ENCODE measurements at regions of chr2 and their contacts with region 1.

Region 1: GRCh38 chr2:70086838-70087701 is at the start of gene PCBP1:
- DNase-seq: peak; percentile 92
- H3K4me3 Mint-ChIP-seq: peak within 1 kb of the TSS; percentile 98
- H3K27ac Mint-ChIP-seq: peak within 1 kb of the TSS; percentile 99
- H3K4me1 Mint-ChIP-seq: peaks cover 53% of the 10 kb centered on the region
- H3K27me3 Mint-ChIP-seq: no peaks in the 10 kb centered on the region
- total RNA-seq, gene PCBP1: 433 and 442 TPM in 2 replicates

Region 2: GRCh38 chr2:70069049-70069448 is 18.0 kb before region 1 on chr2:
- intact Hi-C with region 1: loop called (anchors 1 kb)
- DNase-seq: peak; percentile 75
- H3K4me3 Mint-ChIP-seq: no peak overlapping the region
- H3K27ac Mint-ChIP-seq: peak overlapping the region; percentile 86
- H3K4me1 Mint-ChIP-seq: peaks cover 41% of the 10 kb centered on the region
- H3K27me3 Mint-ChIP-seq: no peaks in the 10 kb centered on the region

Region 3: DNA sequence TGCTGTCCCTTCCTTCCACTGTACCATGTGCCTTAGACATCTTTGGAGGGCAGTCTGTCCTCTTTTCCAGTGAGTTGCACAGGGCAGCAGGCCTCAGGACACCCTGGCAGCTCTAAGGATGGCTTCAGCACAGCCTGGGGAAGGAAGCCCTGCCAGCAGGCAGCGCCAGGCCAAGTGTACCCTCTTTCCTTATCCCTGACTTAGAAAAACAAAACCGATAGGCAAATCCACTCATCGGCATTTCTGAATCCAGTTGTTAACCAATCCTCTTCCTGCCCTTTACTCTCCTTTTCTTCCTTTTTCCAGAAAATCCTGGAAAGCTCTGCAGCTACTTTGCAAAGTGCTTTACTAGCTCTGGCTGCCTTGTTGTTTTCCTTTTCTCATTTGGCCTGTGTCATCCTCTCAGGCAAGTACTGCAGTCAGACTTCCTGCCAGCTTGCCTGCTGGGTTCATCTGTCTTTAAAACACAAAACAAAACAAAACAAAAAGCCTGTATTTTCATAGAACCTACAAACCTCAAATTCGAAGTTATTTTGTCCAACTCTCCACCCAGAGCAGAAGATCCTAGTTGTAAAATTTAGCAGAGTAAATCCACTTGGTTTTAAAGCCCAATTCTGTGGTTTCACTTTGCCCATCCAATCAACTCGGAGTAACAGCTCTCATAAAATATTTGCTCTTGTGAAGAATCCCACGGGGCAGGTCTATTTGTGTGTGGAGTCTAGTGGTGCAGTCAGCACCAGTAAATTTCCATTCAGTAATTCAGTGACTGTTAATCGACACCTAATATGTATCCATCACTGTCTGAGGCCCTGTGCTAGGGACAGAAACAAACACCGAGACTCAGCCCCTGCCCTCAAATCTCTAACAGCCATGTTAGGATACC is 45.4 kb after region 1 on chr2:
- intact Hi-C with region 1: loop called (anchors 1 kb)
- DNase-seq: no peak
- H3K4me3 Mint-ChIP-seq: peak overlapping the region; percentile 87
- H3K27ac Mint-ChIP-seq: peak overlapping the region; percentile 99
- H3K4me1 Mint-ChIP-seq: peaks cover 61% of the 10 kb centered on the region
- H3K27me3 Mint-ChIP-seq: no peaks in the 10 kb centered on the region

Region 4: DNA sequence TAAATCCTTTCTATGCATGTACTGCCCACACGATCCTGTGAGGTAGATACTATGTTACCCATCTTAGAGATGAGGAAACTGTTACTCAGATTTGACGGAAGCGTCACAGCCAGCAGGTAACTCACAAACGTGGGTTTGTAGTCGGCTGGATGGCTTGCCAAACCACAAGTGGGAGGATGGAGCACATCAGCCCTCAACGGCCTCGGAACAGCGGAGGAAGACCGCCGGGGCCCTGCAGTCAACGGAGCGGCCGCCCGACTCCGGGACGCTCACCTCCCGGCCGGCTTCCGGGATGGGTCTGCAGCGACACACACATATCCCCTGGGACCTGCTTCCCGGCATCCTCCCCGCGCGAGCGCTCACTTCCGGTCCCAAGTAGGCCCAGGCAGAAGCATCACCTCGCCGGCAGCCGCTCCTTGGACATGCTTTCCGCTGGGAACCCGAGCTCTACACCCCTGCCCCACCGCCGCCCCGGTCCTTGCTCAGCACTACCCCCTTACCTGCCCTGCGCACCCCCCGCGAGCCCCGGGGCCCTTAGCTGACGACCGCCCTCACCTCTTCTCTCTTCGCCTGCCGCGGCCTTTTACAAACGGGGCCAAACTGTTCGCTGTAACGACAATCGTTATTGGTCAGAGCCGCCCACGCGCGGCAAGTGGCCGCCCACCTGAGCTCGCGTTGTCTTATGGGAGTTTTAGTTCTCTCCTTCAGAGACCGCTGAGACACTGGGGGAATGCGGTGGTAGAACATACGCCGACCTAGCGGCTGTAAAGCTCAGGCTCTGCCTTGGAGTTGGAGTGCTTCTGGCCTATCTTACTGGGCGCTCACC is 103.6 kb after region 1 on chr2 and contains the start of gene C2orf42:
- intact Hi-C with region 1: loop called (anchors 2 kb)
- DNase-seq: peak; percentile 94
- H3K4me3 Mint-ChIP-seq: peak within 1 kb of the TSS; percentile 96
- H3K27ac Mint-ChIP-seq: peak within 1 kb of the TSS; percentile 98
- H3K4me1 Mint-ChIP-seq: peaks cover 18% of the 10 kb centered on the region
- H3K27me3 Mint-ChIP-seq: peaks cover under 1% of the 10 kb centered on the region
- total RNA-seq, gene C2orf42: 22.1 and 24.7 TPM in 2 replicates

Region 5: GRCh38 chr2:70280242-70280798 is 193.2 kb after region 1 on chr2:
- intact Hi-C with region 1: no loop called
- DNase-seq: no peak
- H3K4me3 Mint-ChIP-seq: no peak overlapping the region
- H3K27ac Mint-ChIP-seq: no peak overlapping the region
- H3K4me1 Mint-ChIP-seq: peaks cover 11% of the 10 kb centered on the region
- H3K27me3 Mint-ChIP-seq: no peaks in the 10 kb centered on the region